ENCODE measurements at regions of chr7 and their contacts with region 1.

Region 1: DNA sequence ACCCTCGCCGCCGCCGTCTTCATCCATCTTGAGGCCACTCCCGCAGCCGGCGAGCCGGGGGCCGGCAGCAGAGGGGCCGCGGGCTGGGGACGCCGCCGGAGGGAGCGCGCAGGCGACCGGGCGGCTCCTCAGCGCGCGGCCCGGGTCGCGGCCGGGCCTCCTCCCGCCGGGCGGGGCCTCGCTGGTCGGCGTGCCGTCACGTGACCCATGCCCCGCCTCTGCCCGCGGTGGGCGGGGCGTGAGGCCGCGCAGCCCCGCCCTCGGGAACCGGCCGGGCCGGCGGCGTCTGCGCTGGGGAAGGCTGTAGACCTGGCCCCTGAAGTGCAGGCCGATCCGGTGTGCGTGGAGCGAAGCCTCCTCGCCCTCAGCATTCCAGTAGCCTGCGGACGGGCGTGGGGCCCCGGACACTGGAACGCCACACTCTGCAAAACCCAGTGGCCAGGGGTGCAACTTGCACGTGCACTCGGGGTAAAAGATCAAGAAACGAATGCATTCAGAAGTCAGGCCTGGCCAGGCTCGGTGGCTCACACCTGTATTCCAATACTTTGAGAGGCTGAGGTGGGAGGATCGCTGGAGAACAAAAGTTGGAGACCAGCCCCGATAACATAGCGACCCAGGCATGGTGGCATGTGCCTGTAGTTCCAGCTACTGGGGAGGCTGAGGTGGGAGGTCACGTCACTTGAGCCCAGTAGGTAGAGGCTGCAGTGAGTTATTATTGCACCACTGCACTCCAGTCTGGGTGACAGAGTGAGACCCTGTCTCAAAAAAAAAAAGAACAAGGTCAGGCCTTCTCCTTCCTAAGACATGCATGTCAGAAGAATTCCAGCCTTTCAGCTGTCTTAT is at the start of gene CYTH3:
- DNase-seq: peak; percentile 89
- ATAC-seq: peak; percentile 94
- H3K4me3 ChIP-seq: peak within 1 kb of the TSS; percentile 57 to 91 (median 70)
- H3K4me3 Mint-ChIP-seq: peak within 1 kb of the TSS; percentile 93
- H3K27ac ChIP-seq: no peak within 1 kb of the TSS
- H3K27ac Mint-ChIP-seq: peak within 1 kb of the TSS; percentile 79
- H3K4me1 ChIP-seq: peaks cover 16 to 19% of the 10 kb centered on the region in 2 donors
- H3K4me1 Mint-ChIP-seq: peaks cover 20% of the 10 kb centered on the region
- H3K27me3 ChIP-seq: peaks cover 0 to 8% (median 4%) of the 10 kb centered on the region in 4 experiments
- H3K27me3 Mint-ChIP-seq: peaks cover 34% of the 10 kb centered on the region
- CTCF ChIP-seq: no peak
- total RNA-seq, gene CYTH3: 11.3 and 13.2 TPM in 2 replicates

Region 2: DNA sequence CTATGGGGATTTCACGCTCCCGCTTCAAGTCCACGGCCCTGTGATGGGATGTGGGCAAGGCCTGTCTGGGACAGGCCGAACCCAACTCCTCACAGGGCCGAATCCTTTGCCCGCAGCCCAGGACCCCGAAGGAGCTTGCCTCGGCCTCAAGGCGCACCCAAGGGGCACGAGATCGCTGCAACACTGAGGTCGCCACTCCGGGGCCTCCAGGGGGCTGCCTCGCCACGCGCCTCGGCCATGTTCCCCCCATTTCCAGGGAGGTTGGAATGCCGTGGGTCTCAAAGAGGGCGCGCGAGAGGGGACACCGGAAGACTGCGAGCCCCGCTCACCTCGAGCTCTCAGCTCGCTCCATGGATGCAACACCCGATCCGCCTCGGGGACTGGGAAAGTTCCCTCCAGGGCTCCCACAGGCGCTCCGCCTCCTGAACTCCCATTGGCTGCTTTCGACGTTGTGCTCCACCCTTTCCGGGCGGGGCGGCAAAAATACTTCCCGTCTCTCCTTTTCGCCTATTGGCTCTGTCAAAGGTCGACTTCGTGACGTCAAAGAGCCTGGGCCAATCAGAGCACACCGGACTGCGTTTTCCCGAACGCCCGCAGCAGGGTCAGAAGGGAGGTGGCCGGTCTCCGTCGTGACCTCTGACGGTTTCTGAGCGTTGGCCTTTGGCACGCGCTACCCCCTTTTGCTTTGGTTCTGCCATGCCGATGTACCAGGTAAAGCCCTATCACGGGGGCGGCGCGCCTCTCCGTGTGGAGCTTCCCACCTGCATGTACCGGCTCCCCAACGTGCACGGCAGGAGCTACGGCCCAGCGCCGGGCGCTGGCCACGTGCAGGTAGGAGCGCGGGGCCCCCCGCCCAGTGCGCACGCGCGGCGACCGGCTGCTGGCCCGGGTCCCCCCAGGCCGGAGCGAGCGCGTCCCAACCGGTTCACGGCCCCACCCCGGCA is 263.8 kb before region 1 on chr7 and contains the starts of genes AIMP2 and PMS2:
- CTCF ChIA-PET with region 1: no interaction called
- POLR2A ChIA-PET with region 1: no interaction called
- intact Hi-C with region 1: loop called (anchors 1 kb)
- DNase-seq: peak; percentile 96
- ATAC-seq: peak; percentile 90
- H3K4me3 ChIP-seq: peak within 1 kb of the TSS; percentile 47 to 93 (median 85)
- H3K4me3 Mint-ChIP-seq: peak within 1 kb of the TSS; percentile 94
- H3K27ac ChIP-seq: peak within 1 kb of the TSS; percentile 80 to 86
- H3K27ac Mint-ChIP-seq: peak within 1 kb of the TSS; percentile 93
- H3K4me1 ChIP-seq: peaks cover 3 to 9% of the 10 kb centered on the region in 2 donors
- H3K4me1 Mint-ChIP-seq: peaks cover 34% of the 10 kb centered on the region
- H3K27me3 ChIP-seq: no peaks in the 10 kb centered on the region
- H3K27me3 Mint-ChIP-seq: no peaks in the 10 kb centered on the region
- CTCF ChIP-seq: peak; percentile 33
- total RNA-seq, gene AIMP2: 11.7 and 13.1 TPM in 2 replicates
- total RNA-seq, gene PMS2: 20.3 and 22.5 TPM in 2 replicates

Region 3: DNA sequence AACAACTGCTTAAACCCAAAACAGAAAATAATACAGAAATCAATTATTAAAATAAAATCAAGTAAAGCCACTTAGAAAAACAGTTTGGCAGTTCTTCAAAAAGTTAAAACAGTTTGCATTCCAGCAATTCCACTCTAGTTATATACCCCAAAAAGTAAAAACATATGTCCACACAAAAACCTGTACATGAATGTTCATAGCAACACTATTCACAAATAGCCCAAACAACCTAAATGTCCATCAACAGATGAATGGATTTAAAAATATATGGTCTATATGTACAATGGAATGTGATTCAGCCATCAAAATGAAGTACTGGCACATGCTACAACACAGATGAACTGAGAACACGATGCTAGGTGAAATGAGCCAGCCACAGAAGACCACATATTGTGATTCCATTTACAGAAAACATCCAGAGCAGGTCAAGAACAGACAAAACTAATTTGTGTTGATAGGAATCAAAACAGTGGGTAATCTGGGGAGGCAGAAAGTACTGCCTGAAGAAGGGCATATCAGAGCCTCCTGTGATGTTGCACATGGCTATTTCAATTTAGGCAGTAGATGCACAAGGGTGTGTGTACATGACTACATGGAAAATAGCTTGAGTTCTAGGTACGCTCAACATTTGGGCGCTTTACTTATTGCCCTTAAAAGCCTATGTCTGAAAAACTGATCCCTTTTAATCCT is 66.6 kb before region 1 on chr7:
- CTCF ChIA-PET with region 1: no interaction called
- POLR2A ChIA-PET with region 1: no interaction called
- intact Hi-C with region 1: no loop called
- DNase-seq: no peak
- ATAC-seq: no peak
- H3K4me3 ChIP-seq: no peak overlapping the region
- H3K4me3 Mint-ChIP-seq: no peak overlapping the region
- H3K27ac ChIP-seq: no peak overlapping the region
- H3K27ac Mint-ChIP-seq: no peak overlapping the region
- H3K4me1 ChIP-seq: no peaks in the 10 kb centered on the region
- H3K4me1 Mint-ChIP-seq: no peaks in the 10 kb centered on the region
- H3K27me3 ChIP-seq: no peaks in the 10 kb centered on the region
- H3K27me3 Mint-ChIP-seq: no peaks in the 10 kb centered on the region
- CTCF ChIP-seq: no peak

Region 4: DNA sequence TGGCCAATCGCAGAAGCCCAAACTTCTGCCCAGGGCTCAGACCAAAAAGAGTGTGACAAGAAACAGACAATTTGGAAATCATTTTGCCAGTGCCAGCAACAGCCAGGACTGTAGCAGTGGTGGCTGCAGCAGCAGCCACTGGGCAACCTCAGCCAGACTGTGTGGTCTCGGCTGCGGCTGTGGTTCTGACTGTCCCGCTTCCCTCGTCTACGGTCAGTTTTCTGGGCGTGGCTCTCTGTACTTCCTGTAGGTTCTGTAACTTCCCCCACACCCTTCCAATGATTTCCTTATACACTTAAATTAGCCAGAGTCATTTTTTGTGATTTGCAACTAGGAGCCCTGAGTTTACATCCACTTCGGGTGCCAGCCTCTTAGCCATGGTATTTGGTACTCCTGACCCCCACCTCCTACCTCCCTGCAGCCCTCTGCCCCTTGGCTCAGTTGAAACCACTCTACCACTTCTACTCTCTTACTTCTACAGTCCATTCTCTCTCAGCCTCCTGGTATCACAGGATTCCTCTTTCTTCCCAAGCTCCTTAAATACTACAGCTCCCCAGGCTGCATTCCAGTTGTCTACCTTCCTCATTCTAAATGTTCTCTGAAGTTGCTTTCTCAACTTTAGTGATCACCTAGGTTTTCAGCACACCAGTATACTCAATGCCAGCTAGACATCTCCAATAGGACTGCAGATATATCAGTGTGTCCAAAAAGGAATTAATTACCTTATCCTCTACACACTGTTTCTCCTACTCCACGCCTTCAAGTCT is 40.0 kb before region 1 on chr7:
- CTCF ChIA-PET with region 1: interaction called, 4 read pairs
- POLR2A ChIA-PET with region 1: no interaction called
- intact Hi-C with region 1: loop called (anchors 5 kb)
- DNase-seq: peak; percentile 12
- ATAC-seq: no peak
- H3K4me3 ChIP-seq: peak overlapping the region in 3 of 5 experiments; percentile 2 to 33 (median 24)
- H3K4me3 Mint-ChIP-seq: peak overlapping the region; percentile 47
- H3K27ac ChIP-seq: no peak overlapping the region
- H3K27ac Mint-ChIP-seq: no peak overlapping the region
- H3K4me1 ChIP-seq: peaks cover 32 to 33% of the 10 kb centered on the region in 2 donors
- H3K4me1 Mint-ChIP-seq: peaks cover 48% of the 10 kb centered on the region
- H3K27me3 ChIP-seq: no peaks in the 10 kb centered on the region
- H3K27me3 Mint-ChIP-seq: no peaks in the 10 kb centered on the region
- CTCF ChIP-seq: no peak

Region 5: GRCh38 chr7:6260291-6261187 is 12.2 kb before region 1 on chr7:
- CTCF ChIA-PET with region 1: interaction called, 14 read pairs
- POLR2A ChIA-PET with region 1: no interaction called
- intact Hi-C with region 1: loop called (anchors 1 kb)
- DNase-seq: no peak
- ATAC-seq: no peak
- H3K4me3 ChIP-seq: no peak overlapping the region
- H3K4me3 Mint-ChIP-seq: no peak overlapping the region
- H3K27ac ChIP-seq: no peak overlapping the region
- H3K27ac Mint-ChIP-seq: no peak overlapping the region
- H3K4me1 ChIP-seq: peaks cover 23 to 33% of the 10 kb centered on the region in 2 donors
- H3K4me1 Mint-ChIP-seq: peaks cover 43% of the 10 kb centered on the region
- H3K27me3 ChIP-seq: no peaks in the 10 kb centered on the region
- H3K27me3 Mint-ChIP-seq: no peaks in the 10 kb centered on the region
- CTCF ChIP-seq: no peak